Activated CD4-positive, alpha-beta memory T cell treated with anti-CD3 and anti-CD28 coated beads, Interleukin-2, amount 10 ng/mL, durations not matched to agents 7 days and 5 days (primary cell): ENCODE measurements at regions of chr18 and their contacts with region 1.

Region 1: GRCh38 chr18:80171054-80171872 is 62.2 kb downstream of the ADNP2 start:
- DNase-seq: peak; percentile 62
- H3K4me3 Mint-ChIP-seq: no peak overlapping the region
- H3K27ac Mint-ChIP-seq: no peak overlapping the region
- H3K4me1 Mint-ChIP-seq: peaks cover 16% of the 10 kb centered on the region
- H3K27me3 Mint-ChIP-seq: peaks cover 36% of the 10 kb centered on the region

Region 2: GRCh38 chr18:79988451-79989194 is 182.6 kb before region 1 on chr18 and contains the start of gene TXNL4A:
- CTCF ChIA-PET with region 1: no interaction called
- POLR2A ChIA-PET with region 1: no interaction called
- DNase-seq: peak; percentile 88
- H3K4me3 Mint-ChIP-seq: peak within 1 kb of the TSS; percentile 92
- H3K27ac Mint-ChIP-seq: peak within 1 kb of the TSS; percentile 88
- H3K4me1 Mint-ChIP-seq: peaks cover 41% of the 10 kb centered on the region
- H3K27me3 Mint-ChIP-seq: no peaks in the 10 kb centered on the region
- total RNA-seq, gene TXNL4A: 120 TPM

Region 3: GRCh38 chr18:80126797-80127196 is 44.5 kb before region 1 on chr18:
- CTCF ChIA-PET with region 1: no interaction called
- POLR2A ChIA-PET with region 1: no interaction called
- DNase-seq: no peak
- H3K4me3 Mint-ChIP-seq: no peak overlapping the region
- H3K27ac Mint-ChIP-seq: no peak overlapping the region
- H3K4me1 Mint-ChIP-seq: peaks cover 16% of the 10 kb centered on the region
- H3K27me3 Mint-ChIP-seq: no peaks in the 10 kb centered on the region

Region 4: DNA sequence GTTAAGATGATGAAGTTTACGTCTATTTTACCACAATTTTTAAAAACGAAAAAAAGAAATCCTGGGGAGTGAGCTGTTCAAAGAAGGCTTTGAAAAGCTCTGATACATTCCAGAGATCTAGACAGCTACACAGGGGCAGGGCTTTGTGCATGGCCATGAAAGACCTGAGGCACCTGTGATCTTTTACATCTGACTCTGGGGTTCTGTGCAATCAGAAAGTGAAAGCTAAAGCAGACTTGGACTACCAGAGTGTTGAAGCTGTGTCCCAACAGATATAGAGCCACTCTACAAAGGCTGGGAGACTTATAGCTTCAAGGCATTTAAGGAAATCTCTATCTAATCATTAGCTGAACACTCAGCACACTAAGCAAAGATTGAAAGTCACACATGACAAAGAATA is 41.9 kb after region 1 on chr18:
- CTCF ChIA-PET with region 1: no interaction called
- POLR2A ChIA-PET with region 1: no interaction called
- DNase-seq: no peak
- H3K4me3 Mint-ChIP-seq: no peak overlapping the region
- H3K27ac Mint-ChIP-seq: no peak overlapping the region
- H3K4me1 Mint-ChIP-seq: no peaks in the 10 kb centered on the region
- H3K27me3 Mint-ChIP-seq: peaks cover 36% of the 10 kb centered on the region

Region 5: DNA sequence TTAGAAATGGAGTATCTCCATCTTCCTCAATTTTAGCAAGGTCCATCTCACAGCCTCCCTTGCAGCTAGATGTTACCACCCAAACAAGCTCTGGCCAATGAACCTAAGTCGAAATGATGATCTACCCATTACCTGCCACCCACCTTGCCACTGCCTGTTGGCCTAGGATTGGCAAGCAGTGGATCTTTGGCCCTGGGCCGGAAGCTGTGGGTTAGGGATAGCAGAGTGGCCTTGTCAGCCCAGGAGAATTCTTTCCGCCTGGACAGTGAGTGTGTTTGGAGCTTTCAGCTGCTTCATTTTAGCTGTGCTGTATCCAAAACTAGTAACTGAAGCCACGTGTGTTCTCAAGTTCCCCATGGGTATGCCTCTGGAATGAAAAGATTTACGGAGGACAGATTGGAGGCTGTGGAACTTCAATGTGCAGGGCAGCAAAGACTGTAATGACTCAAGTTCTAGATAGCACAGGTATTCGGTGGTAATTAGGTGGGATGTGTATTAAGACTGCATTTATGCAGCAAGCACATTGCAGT is 83.8 kb after region 1 on chr18:
- CTCF ChIA-PET with region 1: interaction called, 14 read pairs
- POLR2A ChIA-PET with region 1: interaction called, 3 read pairs
- DNase-seq: no peak
- H3K4me3 Mint-ChIP-seq: no peak overlapping the region
- H3K27ac Mint-ChIP-seq: no peak overlapping the region
- H3K4me1 Mint-ChIP-seq: no peaks in the 10 kb centered on the region
- H3K27me3 Mint-ChIP-seq: peaks cover under 1% of the 10 kb centered on the region